ENCODE measurements at regions of chr10 and their contacts with region 1.

Region 1: GRCh38 chr10:35119378-35119777 is 7.3 kb upstream of the CREM start:
- DNase-seq: no peak
- H3K4me3 Mint-ChIP-seq: no peak overlapping the region
- H3K27ac Mint-ChIP-seq: no peak overlapping the region
- H3K4me1 Mint-ChIP-seq: peaks cover 11% of the 10 kb centered on the region
- H3K27me3 Mint-ChIP-seq: no peaks in the 10 kb centered on the region

Region 2: DNA sequence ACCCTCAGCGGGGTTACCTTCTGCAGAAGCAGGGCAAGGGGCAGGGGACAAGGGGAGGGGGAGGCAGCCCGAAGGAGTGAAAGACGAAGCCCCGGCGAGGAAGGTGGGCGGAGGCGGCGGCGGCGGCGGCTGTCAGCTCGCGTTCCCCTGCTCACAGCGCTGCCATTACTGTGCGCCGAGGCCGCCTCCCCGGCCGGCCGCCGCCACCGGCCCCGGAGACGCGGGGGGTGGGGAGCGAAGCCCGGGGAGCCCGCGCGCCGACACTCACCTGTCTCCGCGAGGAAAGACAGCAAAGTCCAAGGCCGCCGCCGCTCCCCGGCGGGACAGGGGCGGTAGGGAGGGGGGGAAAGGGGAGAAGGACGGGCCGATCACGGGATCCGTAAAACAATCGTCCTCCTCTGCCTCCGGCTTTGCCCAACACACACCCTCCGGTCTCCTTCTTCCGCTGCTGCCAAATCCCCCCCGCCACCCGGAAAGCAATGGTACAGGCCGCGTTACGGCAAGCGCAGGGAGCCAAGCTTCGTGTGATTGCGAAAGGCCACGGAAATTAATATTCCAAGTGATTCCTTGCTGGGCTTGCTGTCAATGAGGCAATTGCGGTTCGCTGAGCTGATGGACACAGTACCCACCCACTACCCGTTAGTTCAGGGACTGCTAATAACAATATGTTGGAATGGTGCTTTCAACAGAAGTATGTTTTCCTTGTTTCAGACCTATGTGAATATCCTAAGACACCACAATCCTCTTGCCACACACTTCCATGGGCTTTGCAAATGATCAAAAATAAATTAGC is 29.0 kb before region 1 on chr10 and contains the start of gene CUL2:
- CTCF ChIA-PET with region 1: interaction called, 14 read pairs
- POLR2A ChIA-PET with region 1: no interaction called
- intact Hi-C with region 1: no loop called
- DNase-seq: peak; percentile 94
- H3K4me3 Mint-ChIP-seq: peak within 1 kb of the TSS; percentile 95
- H3K27ac Mint-ChIP-seq: peak within 1 kb of the TSS; percentile 94
- H3K4me1 Mint-ChIP-seq: peaks cover 50% of the 10 kb centered on the region
- H3K27me3 Mint-ChIP-seq: no peaks in the 10 kb centered on the region
- total RNA-seq, gene CUL2: 39.7 to 43.3 TPM

Region 3: DNA sequence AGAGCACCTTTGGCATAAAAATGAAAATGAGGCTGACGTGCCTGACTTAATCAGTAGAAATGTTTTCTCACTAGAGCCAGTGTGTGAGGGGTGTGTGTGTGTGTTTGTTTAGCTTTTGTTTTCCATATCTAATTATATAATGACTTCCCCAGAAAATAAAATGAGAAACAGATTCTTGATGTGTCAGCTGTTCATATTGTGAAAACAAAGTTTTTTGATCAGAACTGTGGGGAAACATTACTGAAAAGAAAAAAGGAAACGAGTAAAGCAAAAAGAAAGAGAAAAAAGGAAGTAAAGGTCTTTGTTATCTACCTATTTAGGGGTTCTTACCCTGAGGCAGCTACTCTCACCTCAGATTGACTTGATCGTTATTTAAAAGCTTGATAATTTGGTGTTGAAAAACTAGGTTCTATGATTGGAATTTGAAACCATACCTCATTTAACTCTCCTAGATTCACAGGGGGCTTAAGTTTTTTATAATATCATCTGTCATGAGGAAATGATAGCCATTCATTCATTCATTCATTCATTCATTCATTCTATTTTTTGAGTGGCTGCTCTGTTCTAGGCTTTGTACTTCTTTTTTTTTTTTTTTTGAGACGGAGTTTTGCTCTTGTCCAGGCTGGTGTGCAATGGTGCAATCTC is 65.3 kb after region 1 on chr10:
- CTCF ChIA-PET with region 1: no interaction called
- POLR2A ChIA-PET with region 1: no interaction called
- intact Hi-C with region 1: no loop called
- DNase-seq: no peak
- H3K4me3 Mint-ChIP-seq: no peak overlapping the region
- H3K27ac Mint-ChIP-seq: no peak overlapping the region
- H3K4me1 Mint-ChIP-seq: peaks cover 4% of the 10 kb centered on the region
- H3K27me3 Mint-ChIP-seq: no peaks in the 10 kb centered on the region

Region 4: DNA sequence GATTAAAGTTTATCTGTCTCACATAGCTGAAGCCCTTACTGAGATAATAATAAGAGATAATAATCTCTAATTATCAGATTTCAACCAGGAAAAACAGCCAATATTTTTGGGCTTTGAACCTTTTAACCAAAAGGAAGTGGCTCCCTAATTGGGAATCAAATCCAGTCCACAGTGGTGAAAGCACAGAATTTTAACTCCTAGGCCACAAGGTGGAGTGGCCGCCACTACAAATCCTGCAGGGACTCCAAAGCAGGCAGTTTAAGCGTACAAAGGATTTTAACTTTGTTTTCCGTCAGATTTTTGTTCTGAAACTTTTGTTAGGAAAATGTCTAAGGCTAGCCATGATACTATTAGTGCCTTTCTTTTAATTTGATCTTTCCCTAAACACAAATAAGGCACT is 117.4 kb after region 1 on chr10:
- CTCF ChIA-PET with region 1: interaction called, 14 read pairs
- POLR2A ChIA-PET with region 1: no interaction called
- intact Hi-C with region 1: no loop called
- DNase-seq: no peak
- H3K4me3 Mint-ChIP-seq: no peak overlapping the region
- H3K27ac Mint-ChIP-seq: no peak overlapping the region
- H3K4me1 Mint-ChIP-seq: no peaks in the 10 kb centered on the region
- H3K27me3 Mint-ChIP-seq: no peaks in the 10 kb centered on the region

Region 5: DNA sequence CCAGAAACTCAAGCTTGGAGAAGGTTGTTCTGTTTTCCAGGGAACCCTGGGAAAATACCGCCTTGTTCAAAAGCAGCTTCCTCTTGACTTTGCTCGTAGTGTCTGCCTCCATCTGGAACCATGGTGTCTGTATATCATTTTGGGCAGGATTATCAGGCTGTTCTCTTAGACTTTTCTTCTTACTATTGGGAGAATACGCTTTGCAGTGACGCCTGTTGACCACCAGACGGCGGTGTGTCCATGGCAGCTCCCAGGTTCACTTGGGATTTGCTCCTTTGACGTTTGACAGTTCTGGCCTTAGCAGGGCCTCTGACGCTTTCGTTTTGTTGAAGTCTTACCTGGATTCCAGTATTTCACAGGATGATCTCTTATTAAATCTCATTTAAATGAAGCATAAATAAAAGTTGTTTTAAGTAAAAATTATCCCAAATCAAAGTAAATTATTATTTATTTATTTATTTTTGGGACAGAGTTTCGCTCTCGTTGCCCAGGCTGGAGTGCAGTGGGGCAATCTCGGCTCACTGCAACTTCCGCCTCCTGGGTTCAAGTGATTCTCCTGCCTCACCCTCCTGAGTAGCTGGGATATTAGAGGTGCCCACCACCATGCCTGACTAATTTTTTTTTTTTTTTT is 444.0 kb after region 1 on chr10:
- CTCF ChIA-PET with region 1: interaction called, 21 read pairs
- POLR2A ChIA-PET with region 1: no interaction called
- intact Hi-C with region 1: loop called (anchors 10 kb)
- DNase-seq: peak; percentile 61
- H3K4me3 Mint-ChIP-seq: no peak overlapping the region
- H3K27ac Mint-ChIP-seq: no peak overlapping the region
- H3K4me1 Mint-ChIP-seq: no peaks in the 10 kb centered on the region
- H3K27me3 Mint-ChIP-seq: no peaks in the 10 kb centered on the region

Measured in activated CD4-positive, alpha-beta memory T cell treated with anti-CD3 and anti-CD28 coated beads for 36 hours (primary cell).